ENCODE measurements at regions of chr17 and their contacts with region 1.

Region 1: DNA sequence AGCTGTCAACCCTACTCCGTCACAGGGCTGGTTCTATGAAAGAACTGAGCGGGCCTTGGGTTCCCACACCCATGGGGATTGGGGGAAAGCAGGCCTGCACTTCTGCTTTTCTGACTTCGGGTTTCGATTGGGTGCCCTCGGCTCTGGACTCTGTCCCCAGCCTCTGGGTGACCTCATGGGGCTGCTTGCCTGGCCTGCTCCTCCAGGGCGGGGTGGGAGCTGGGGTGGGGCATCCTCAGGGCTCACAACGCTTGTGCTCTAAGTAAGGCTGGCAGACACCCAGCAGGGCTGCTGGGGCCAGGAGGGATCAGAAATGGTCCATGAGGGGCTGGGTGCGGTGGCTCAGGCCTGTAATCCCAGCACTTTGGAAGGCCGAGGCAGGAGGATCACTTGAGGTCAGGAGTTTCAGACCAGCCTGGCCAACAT is 19.2 kb downstream of the ARHGAP27 start:
- DNase-seq: no peak
- H3K4me3 ChIP-seq: no peak overlapping the region
- H3K27me3 ChIP-seq: no peaks in the 10 kb centered on the region
- CTCF ChIP-seq: no peak

Region 2: DNA sequence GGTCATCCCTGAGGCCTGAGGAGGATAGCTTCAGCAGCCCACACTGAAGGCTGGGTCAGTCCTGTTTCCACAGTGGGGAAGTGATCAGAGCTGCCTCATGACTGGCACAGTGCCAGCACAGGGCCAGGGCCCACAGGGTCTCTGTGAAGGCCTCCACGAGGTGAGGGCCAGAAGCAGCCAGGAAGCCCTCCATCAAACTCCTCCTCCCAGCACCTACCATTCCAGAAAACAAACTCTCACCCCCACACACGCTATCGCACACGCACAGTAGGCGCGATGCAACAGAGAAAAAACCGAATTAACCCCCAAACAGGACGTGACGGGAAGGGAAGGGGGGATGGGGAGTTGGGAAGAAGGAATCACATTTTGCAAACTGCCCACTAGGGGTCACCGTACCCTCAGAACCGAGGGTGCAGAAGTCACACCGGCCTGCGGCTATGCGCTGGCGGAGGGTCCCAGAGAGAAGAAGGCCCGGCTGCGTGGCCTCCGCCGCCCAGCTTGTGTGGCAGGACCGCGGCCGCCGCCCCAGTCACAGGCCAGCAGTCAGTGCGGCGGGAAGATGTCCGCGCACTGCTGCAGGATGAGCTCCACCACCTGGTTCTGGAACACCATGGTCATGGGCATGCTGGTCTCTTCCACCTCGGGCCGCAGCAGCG is 18.5 kb before region 1 on chr17:
- CTCF ChIA-PET with region 1: interaction called, 13 read pairs
- POLR2A ChIA-PET with region 1: no interaction called
- DNase-seq: peak; percentile 27
- H3K4me3 ChIP-seq: peak overlapping the region; percentile 4; the same call in 1 of the 2 replicates
- H3K27me3 ChIP-seq: peaks cover 1% of the 10 kb centered on the region; the same call in 1 of the 2 replicates
- CTCF ChIP-seq: peak; percentile 80

Region 3: GRCh38 chr17:45428050-45428617 is 14.6 kb after region 1 on chr17:
- CTCF ChIA-PET with region 1: interaction called, 12 read pairs
- POLR2A ChIA-PET with region 1: no interaction called
- DNase-seq: no peak
- H3K4me3 ChIP-seq: no peak overlapping the region
- H3K27me3 ChIP-seq: peaks cover 14% of the 10 kb centered on the region
- CTCF ChIP-seq: peak; percentile 97

Measured in BJ (cell line).